B cell (primary cell): ENCODE measurements at regions of chr3 and their contacts with region 1.

Region 1: DNA sequence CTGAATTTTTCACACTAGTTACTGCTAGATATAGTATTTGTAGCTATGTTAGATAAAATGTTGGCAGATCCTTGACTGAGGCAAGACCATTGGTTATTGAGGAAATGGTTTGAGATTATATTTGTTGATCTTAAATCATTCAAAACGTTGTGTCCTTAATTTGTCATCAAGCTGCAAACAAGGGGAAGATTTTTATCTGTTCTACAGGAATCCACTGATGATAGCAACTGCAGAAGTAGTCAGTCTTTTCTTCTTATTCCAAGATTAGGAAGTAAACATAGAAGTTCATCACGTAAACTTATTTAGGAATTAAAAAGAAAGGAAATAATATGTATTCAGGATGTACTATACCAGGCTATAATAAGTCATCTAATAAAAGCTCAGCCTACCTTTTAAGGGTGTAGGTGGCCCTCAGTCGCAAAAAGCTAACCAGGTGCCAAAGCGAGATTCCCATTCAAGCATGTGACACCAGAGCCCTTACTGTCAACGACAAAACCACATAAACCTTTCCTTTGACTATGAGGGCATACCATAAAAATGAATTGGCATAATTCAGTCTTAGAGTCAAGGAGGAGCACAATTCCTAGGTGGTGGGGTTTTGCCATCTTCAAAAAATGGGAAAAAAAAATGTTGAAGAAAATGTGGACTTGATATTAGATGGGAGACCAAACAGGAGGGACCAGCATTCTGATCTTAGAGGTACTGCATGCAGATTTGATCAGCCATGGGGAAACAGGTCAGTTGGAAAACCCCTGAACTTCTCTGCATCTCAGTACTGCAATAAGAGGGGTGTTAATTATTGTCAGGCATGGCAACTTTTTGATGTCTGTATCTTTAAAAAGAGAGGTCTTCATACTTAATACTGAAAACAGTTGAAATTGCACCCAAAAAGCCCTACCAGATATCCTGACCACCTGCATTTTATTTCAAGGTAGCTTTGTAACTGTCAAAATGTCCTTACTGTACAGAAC is 212.5 kb upstream of the UBE2E1 start:
- DNase-seq: no peak
- ATAC-seq: no peak
- H3K4me3 ChIP-seq: no peak overlapping the region
- H3K4me3 Mint-ChIP-seq: no peak overlapping the region
- H3K27ac ChIP-seq: no peak overlapping the region
- H3K27ac Mint-ChIP-seq: no peak overlapping the region
- H3K4me1 ChIP-seq: peaks cover 4 to 14% of the 10 kb centered on the region in 2 donors
- H3K4me1 Mint-ChIP-seq: peaks cover 20% of the 10 kb centered on the region
- H3K27me3 ChIP-seq: no peaks in the 10 kb centered on the region
- H3K27me3 Mint-ChIP-seq: no peaks in the 10 kb centered on the region
- CTCF ChIP-seq: no peak

Region 2: GRCh38 chr3:23183734-23184133 is 409.5 kb before region 1 on chr3:
- CTCF ChIA-PET with region 1: no interaction called
- POLR2A ChIA-PET with region 1: interaction called, 10 read pairs
- intact Hi-C with region 1: no loop called
- DNase-seq: no peak
- ATAC-seq: peak; percentile 28
- H3K4me3 ChIP-seq: no peak overlapping the region
- H3K4me3 Mint-ChIP-seq: no peak overlapping the region
- H3K27ac ChIP-seq: no peak overlapping the region
- H3K27ac Mint-ChIP-seq: no peak overlapping the region
- H3K4me1 ChIP-seq: no peaks in the 10 kb centered on the region
- H3K4me1 Mint-ChIP-seq: no peaks in the 10 kb centered on the region
- H3K27me3 ChIP-seq: no peaks in the 10 kb centered on the region
- H3K27me3 Mint-ChIP-seq: no peaks in the 10 kb centered on the region
- CTCF ChIP-seq: no peak

Region 3: GRCh38 chr3:23740517-23740965 is 147.3 kb after region 1 on chr3:
- CTCF ChIA-PET with region 1: no interaction called
- POLR2A ChIA-PET with region 1: no interaction called
- intact Hi-C with region 1: no loop called
- DNase-seq: no peak
- ATAC-seq: no peak
- H3K4me3 ChIP-seq: no peak overlapping the region
- H3K4me3 Mint-ChIP-seq: no peak overlapping the region
- H3K27ac ChIP-seq: no peak overlapping the region
- H3K27ac Mint-ChIP-seq: no peak overlapping the region
- H3K4me1 ChIP-seq: no peaks in the 10 kb centered on the region
- H3K4me1 Mint-ChIP-seq: peaks cover 2% of the 10 kb centered on the region
- H3K27me3 ChIP-seq: no peaks in the 10 kb centered on the region
- H3K27me3 Mint-ChIP-seq: no peaks in the 10 kb centered on the region
- CTCF ChIP-seq: no peak